T-cell (primary cell): ENCODE measurements at regions of chr17 and their contacts with region 1.

Region 1: GRCh38 chr17:75632863-75633485 is at the start of gene SMIM5:
- DNase-seq: peak; percentile 57 to 89 (median 76)
- ATAC-seq: peak; percentile 77 to 84 (median 79)
- H3K4me3 ChIP-seq: no peak within 1 kb of the TSS
- H3K4me3 Mint-ChIP-seq: no peak within 1 kb of the TSS
- H3K27ac ChIP-seq: no peak within 1 kb of the TSS
- H3K27ac Mint-ChIP-seq: no peak within 1 kb of the TSS
- H3K4me1 ChIP-seq: peaks cover 2 to 16% of the 10 kb centered on the region in 2 experiments
- H3K4me1 Mint-ChIP-seq: peaks cover 8 to 12% (median 9%) of the 10 kb centered on the region in 3 donors
- H3K27me3 ChIP-seq: no peaks in the 10 kb centered on the region
- H3K27me3 Mint-ChIP-seq: no peaks in the 10 kb centered on the region
- total RNA-seq, gene SMIM5: 0.35 to 2.2 (median 0.82) TPM

Region 2: GRCh38 chr17:75371339-75371738 is 261.6 kb before region 1 on chr17:
- CTCF ChIA-PET with region 1: no interaction called
- POLR2A ChIA-PET with region 1: interaction called in 1 of 2 experiments, 10 read pairs
- DNase-seq: peak in 2 of 35 experiments; percentile 6 to 29
- ATAC-seq: peak in 1 of 4 experiments; percentile 68
- H3K4me3 ChIP-seq: no peak overlapping the region
- H3K4me3 Mint-ChIP-seq: peak overlapping the region in 1 of 3 donors; percentile 73
- H3K27ac ChIP-seq: no peak overlapping the region
- H3K27ac Mint-ChIP-seq: peak overlapping the region; percentile 25 to 66
- H3K4me1 ChIP-seq: peaks cover 2 to 56% of the 10 kb centered on the region in 2 experiments
- H3K4me1 Mint-ChIP-seq: peaks cover 80 to 82% (median 81%) of the 10 kb centered on the region in 3 donors
- H3K27me3 ChIP-seq: no peaks in the 10 kb centered on the region
- H3K27me3 Mint-ChIP-seq: no peaks in the 10 kb centered on the region

Region 3: DNA sequence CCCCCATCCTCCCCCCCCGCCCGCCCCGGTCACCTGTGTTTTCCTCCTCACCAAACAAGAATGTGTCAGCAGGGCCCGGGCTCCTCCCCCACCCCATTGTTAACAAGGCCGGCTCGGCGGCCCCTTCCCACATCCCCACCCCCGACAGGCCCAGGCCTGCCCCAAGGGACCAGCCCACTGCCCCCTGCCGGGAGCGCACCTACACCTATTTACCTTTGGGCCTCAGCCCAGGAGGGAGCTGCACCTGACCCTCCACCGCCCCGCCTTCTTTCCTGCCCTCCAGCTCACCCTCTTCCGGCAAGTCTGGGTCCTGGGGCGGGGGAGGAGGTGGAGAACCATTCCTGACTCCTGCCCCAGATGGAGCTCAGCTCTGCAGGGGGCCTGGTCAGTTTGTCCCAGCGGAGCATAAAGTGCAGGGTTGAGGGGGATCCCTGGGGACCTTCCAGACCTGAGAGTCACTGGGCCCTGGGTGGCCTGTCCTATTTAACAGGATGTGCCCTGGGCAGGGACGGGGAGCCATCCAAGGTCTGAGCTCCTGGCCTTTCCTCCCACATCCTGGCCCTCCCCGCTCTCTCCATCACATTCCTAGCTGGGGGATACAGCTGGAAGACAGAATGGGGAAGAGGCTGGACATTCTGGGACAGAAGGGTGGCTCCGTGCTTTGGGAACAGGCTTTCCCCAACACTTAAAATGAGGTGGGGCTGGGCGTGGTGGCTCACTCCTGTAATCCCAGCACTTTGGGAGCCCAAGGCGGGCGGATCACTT is 499.8 kb after region 1 on chr17:
- CTCF ChIA-PET with region 1: no interaction called
- POLR2A ChIA-PET with region 1: no interaction called
- DNase-seq: no peak
- ATAC-seq: no peak
- H3K4me3 ChIP-seq: no peak overlapping the region
- H3K4me3 Mint-ChIP-seq: peak overlapping the region in 1 of 3 donors; percentile 44
- H3K27ac ChIP-seq: no peak overlapping the region
- H3K27ac Mint-ChIP-seq: no peak overlapping the region
- H3K4me1 ChIP-seq: peaks cover 5 to 25% of the 10 kb centered on the region in 2 experiments
- H3K4me1 Mint-ChIP-seq: peaks cover 18 to 28% (median 19%) of the 10 kb centered on the region in 3 donors
- H3K27me3 ChIP-seq: peaks cover 0 to 4% of the 10 kb centered on the region in 2 experiments
- H3K27me3 Mint-ChIP-seq: no peaks in the 10 kb centered on the region